ENCODE measurements at regions of chr15 and their contacts with region 1.

Region 1: DNA sequence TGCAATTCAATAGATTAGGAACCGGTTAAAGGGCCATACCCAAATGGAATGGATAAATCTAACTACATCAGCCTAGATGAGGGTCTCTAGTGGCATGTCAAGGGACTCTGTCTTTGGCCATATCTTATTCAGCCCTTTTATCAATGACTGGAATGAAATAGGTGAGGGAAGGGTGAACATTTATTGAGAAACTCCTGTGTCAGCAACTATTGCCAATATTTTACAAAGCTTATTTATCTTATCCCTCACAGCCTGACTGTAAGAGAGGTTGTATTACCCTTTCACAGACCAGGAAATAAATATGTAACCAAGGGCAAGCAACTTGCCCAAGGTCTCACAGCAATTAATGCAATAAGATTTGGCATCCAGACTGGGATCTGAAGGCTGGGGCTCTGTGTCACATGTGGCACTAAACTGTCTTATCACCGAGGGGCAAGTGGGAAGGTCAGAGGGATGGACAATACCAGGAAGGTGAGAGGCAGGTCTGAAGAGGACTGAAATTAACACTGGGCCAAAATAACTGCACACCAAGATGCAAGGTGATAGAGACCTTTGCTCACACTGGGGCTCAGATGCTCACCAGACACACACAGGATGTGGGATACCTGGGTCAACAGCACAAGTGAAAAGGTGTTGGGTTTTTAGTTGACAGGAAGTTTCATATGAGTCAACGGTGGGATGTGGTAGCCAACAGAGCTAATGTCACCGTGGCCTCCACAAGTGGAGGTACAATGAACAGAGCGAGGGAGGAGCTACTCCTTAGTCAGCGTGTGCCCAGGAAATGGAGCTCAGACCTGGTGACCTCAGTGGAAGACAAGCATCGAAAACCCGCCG is 261.3 kb downstream of the RPLP1 start:
- DNase-seq: peak in 9 of 10 donors; percentile 33 to 85 (median 71)
- ATAC-seq: peak; percentile 92 to 96
- H3K4me3 Mint-ChIP-seq: peak overlapping the region; percentile 1 to 79 (median 68)
- H3K27ac Mint-ChIP-seq: peak overlapping the region; percentile 6 to 95 (median 86)
- H3K4me1 Mint-ChIP-seq: peaks cover 28 to 65% (median 61%) of the 10 kb centered on the region in 4 donors
- H3K27me3 Mint-ChIP-seq: no peaks in the 10 kb centered on the region

Region 2: GRCh38 chr15:69679623-69680228 is 34.2 kb before region 1 on chr15:
- POLR2A ChIA-PET with region 1: no interaction called
- DNase-seq: no peak
- ATAC-seq: no peak
- H3K4me3 Mint-ChIP-seq: peak overlapping the region in 2 of 10 donors; percentile 52 to 57
- H3K27ac Mint-ChIP-seq: peak overlapping the region in 5 of 10 donors; percentile 4 to 65 (median 33)
- H3K4me1 Mint-ChIP-seq: peaks cover 4 to 11% (median 5%) of the 10 kb centered on the region in 4 donors
- H3K27me3 Mint-ChIP-seq: peaks cover 2 to 23% (median 12%) of the 10 kb centered on the region in 5 donors

Region 3: DNA sequence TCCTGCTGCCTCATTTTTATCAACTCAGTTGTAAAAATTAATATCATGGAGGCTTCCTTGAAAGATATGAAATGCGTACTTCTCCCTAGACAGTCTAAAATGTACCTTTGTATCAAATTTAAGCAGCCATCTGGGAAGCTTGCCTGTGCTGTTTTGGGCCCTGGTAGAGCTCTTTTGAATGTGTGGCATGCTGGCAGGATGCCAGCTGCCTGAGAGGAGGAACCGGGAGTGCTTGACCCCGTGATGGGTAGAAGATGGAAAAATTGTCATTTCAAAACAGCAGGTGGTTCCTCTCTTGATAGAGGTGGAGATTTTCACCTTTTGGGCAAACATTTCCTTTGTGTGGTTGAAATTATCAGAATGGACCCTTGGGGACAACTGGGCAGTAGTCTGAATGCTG is 16.0 kb before region 1 on chr15:
- POLR2A ChIA-PET with region 1: no interaction called
- DNase-seq: no peak
- ATAC-seq: no peak
- H3K4me3 Mint-ChIP-seq: no peak overlapping the region
- H3K27ac Mint-ChIP-seq: no peak overlapping the region
- H3K4me1 Mint-ChIP-seq: peaks cover 0 to 4% (median 1%) of the 10 kb centered on the region in 4 donors
- H3K27me3 Mint-ChIP-seq: no peaks in the 10 kb centered on the region

Region 4: GRCh38 chr15:69760890-69761568 is 47.1 kb after region 1 on chr15:
- POLR2A ChIA-PET with region 1: interaction called, 28 read pairs
- DNase-seq: peak; percentile 35 to 92 (median 75)
- ATAC-seq: peak; percentile 71 to 76
- H3K4me3 Mint-ChIP-seq: peak overlapping the region; percentile 36 to 79 (median 68)
- H3K27ac Mint-ChIP-seq: peak overlapping the region; percentile 41 to 97 (median 82)
- H3K4me1 Mint-ChIP-seq: peaks cover 32 to 75% (median 64%) of the 10 kb centered on the region in 4 donors
- H3K27me3 Mint-ChIP-seq: peaks cover 0 to 8% (median 3%) of the 10 kb centered on the region in 5 donors